Sciatic nerve (tissue), 2 donors: ENCODE measurements at regions of chr5 and their contacts with region 1.

Region 1: DNA sequence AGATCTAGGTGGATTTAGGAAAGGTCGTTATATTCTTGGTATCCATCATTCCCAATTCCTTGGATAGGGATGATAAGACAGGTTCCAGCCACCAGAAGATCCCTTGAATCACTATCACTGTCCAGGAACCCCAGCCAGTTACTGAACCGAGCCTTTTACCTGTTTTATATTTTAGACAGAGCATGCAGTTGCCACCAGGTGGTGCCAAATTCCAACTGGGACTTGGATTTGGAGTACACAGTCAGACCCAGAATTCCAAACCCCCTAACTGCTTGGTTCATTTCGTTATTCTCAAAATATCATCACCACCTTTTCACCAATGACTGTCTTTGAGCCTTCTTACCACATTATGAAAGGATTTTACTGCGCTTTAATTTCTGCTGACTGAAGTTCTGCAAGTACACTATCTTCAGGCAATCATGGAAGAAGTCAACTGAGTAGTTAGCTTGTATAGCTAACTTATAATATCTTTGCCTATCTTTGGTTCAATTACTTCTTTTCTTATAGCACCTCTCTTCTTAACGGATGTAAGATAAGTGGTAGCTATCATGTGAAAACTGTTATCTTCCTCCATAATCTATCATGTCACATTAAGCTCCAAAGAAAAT is 191.8 kb downstream of the PRR16 start:
- DNase-seq: no peak
- ATAC-seq: no peak

Region 2: GRCh38 chr5:121949867-121950266 is 1293.9 kb after region 1 on chr5:
- intact Hi-C with region 1: loop called (anchors 10 kb)
- DNase-seq: no peak
- ATAC-seq: peak; percentile 62